Naive thymus-derived CD4-positive, alpha-beta T cell (primary cell): ENCODE measurements at regions of chr11 and their contacts with region 1.

Region 1: GRCh38 chr11:66438504-66439466 is at the start of gene MRPL11:
- DNase-seq: peak; percentile 74 to 93 (median 90)
- ATAC-seq: peak; percentile 100
- H3K4me3 ChIP-seq: peak within 1 kb of the TSS; percentile 86
- H3K4me3 Mint-ChIP-seq: peak within 1 kb of the TSS; percentile 83 to 96 (median 90)
- H3K27ac ChIP-seq: peak within 1 kb of the TSS; percentile 84
- H3K27ac Mint-ChIP-seq: peak within 1 kb of the TSS; percentile 84 to 99 (median 94)
- H3K4me1 ChIP-seq: peaks cover 4 to 5% of the 10 kb centered on the region in 2 donors
- H3K4me1 Mint-ChIP-seq: peaks cover 7 to 13% (median 11%) of the 10 kb centered on the region in 7 donors
- H3K27me3 ChIP-seq: no peaks in the 10 kb centered on the region
- H3K27me3 Mint-ChIP-seq: peaks cover 0 to 7% (median 0%) of the 10 kb centered on the region in 5 donors
- total RNA-seq, gene MRPL11: 23.5 to 64.1 (median 24.0) TPM

Region 2: GRCh38 chr11:66268283-66268951 is 170.4 kb before region 1 on chr11 and contains the start of gene RAB1B:
- CTCF ChIA-PET with region 1: no interaction called
- POLR2A ChIA-PET with region 1: no interaction called
- intact Hi-C with region 1: loop called in 1 of 2 experiments (anchors 1 kb)
- DNase-seq: peak; percentile 99 to 100 (median 99)
- ATAC-seq: peak; percentile 89
- H3K4me3 ChIP-seq: peak within 1 kb of the TSS; percentile 91
- H3K4me3 Mint-ChIP-seq: peak within 1 kb of the TSS; percentile 88 to 100 (median 95)
- H3K27ac ChIP-seq: peak within 1 kb of the TSS; percentile 90
- H3K27ac Mint-ChIP-seq: peak within 1 kb of the TSS; percentile 95 to 99 (median 97)
- H3K4me1 ChIP-seq: peaks cover 16 to 38% of the 10 kb centered on the region in 2 donors
- H3K4me1 Mint-ChIP-seq: peaks cover 26 to 48% (median 34%) of the 10 kb centered on the region in 7 donors
- H3K27me3 ChIP-seq: no peaks in the 10 kb centered on the region
- H3K27me3 Mint-ChIP-seq: peaks cover 0 to 3% (median 0%) of the 10 kb centered on the region in 5 donors
- total RNA-seq, gene RAB1B: 60.6 to 151 (median 70.7) TPM

Region 3: GRCh38 chr11:66386171-66387069 is 52.4 kb before region 1 on chr11:
- CTCF ChIA-PET with region 1: interaction called, 4 read pairs
- POLR2A ChIA-PET with region 1: interaction called, 3 read pairs
- intact Hi-C with region 1: loop called in 1 of 2 experiments (anchors 5 kb)
- DNase-seq: peak; percentile 59 to 83 (median 75)
- ATAC-seq: peak; percentile 83
- H3K4me3 ChIP-seq: no peak overlapping the region
- H3K4me3 Mint-ChIP-seq: peak overlapping the region; percentile 5 to 71 (median 40)
- H3K27ac ChIP-seq: no peak overlapping the region
- H3K27ac Mint-ChIP-seq: peak overlapping the region in 4 of 9 donors; percentile 0 to 20 (median 6)
- H3K4me1 ChIP-seq: peaks cover 4 to 8% of the 10 kb centered on the region in 2 donors
- H3K4me1 Mint-ChIP-seq: peaks cover 0 to 12% (median 7%) of the 10 kb centered on the region in 7 donors
- H3K27me3 ChIP-seq: no peaks in the 10 kb centered on the region
- H3K27me3 Mint-ChIP-seq: peaks cover 0 to 15% (median 0%) of the 10 kb centered on the region in 5 donors

Region 4: GRCh38 chr11:66454249-66454648 is 15.5 kb after region 1 on chr11:
- CTCF ChIA-PET with region 1: interaction called, 12 read pairs
- POLR2A ChIA-PET with region 1: interaction called, 5 read pairs
- intact Hi-C with region 1: no loop called
- DNase-seq: no peak
- ATAC-seq: no peak
- H3K4me3 ChIP-seq: no peak overlapping the region
- H3K4me3 Mint-ChIP-seq: peak overlapping the region in 3 of 10 donors; percentile 10 to 35 (median 24)
- H3K27ac ChIP-seq: no peak overlapping the region
- H3K27ac Mint-ChIP-seq: peak overlapping the region in 1 of 9 donors; percentile 30
- H3K4me1 ChIP-seq: peaks cover 0 to 10% of the 10 kb centered on the region in 2 donors
- H3K4me1 Mint-ChIP-seq: peaks cover 6 to 25% (median 18%) of the 10 kb centered on the region in 7 donors
- H3K27me3 ChIP-seq: no peaks in the 10 kb centered on the region
- H3K27me3 Mint-ChIP-seq: peaks cover 0 to 10% (median 4%) of the 10 kb centered on the region in 5 donors

Region 5: GRCh38 chr11:66510271-66510989 is 71.6 kb after region 1 on chr11 and contains the start of gene BBS1:
- CTCF ChIA-PET with region 1: no interaction called
- POLR2A ChIA-PET with region 1: no interaction called
- intact Hi-C with region 1: loop called in 1 of 2 experiments (anchors 1 kb)
- DNase-seq: peak; percentile 64 to 85 (median 78)
- ATAC-seq: peak; percentile 98
- H3K4me3 ChIP-seq: peak within 1 kb of the TSS; percentile 89
- H3K4me3 Mint-ChIP-seq: peak within 1 kb of the TSS; percentile 86 to 95 (median 90)
- H3K27ac ChIP-seq: peak within 1 kb of the TSS; percentile 65
- H3K27ac Mint-ChIP-seq: peak within 1 kb of the TSS; percentile 36 to 77 (median 67)
- H3K4me1 ChIP-seq: peaks cover 6 to 10% of the 10 kb centered on the region in 2 donors
- H3K4me1 Mint-ChIP-seq: peaks cover 9 to 24% (median 18%) of the 10 kb centered on the region in 7 donors
- H3K27me3 ChIP-seq: no peaks in the 10 kb centered on the region
- H3K27me3 Mint-ChIP-seq: no peaks in the 10 kb centered on the region
- total RNA-seq, gene BBS1: 16.9 to 38.2 (median 23.6) TPM

Region 6: DNA sequence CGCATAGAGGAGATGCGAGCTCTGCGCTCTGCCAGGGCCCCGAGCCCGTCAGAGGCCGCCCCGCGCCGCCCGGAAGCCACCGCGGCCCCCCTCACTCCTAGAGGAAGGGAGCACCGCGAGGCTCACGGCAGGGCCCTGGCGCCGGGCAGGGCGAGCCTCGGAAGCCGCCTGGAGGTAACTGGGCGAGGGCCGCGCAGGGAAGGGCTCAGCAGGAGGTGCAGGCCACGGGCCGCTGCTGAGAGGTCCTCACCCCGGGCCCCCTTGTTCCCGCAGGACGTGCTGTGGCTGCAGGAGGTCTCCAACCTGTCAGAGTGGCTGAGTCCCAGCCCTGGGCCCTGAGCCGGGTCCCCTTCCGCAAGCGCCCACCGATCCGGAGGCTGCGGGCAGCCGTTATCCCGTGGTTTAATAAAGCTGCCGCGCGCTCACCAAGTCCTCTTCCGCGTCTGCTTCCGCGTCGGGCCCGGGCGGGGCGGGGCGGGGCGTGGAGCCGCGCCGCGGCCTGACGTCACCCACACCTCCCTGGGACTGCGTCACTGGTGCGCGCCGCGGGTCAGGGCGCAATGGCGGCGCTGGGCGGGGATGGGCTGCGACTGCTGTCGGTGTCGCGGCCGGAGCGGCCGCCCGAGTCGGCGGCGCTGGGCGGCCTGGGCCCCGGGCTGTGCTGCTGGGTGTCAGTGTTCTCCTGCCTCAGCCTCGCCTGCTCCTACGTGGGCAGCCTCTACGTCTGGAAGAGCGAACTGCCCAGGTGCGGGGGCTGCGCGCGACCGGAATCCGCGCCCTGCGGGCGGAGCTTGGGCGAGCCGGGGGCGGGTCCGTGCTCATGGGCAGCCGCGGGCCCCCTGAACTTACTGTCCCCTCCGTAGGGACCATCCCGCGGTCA is 404.4 kb after region 1 on chr11 and contains the start of gene RCE1:
- CTCF ChIA-PET with region 1: no interaction called
- POLR2A ChIA-PET with region 1: no interaction called
- intact Hi-C with region 1: loop called in 1 of 2 experiments (anchors 1 kb)
- DNase-seq: peak; percentile 86 to 96 (median 91)
- ATAC-seq: peak; percentile 96
- H3K4me3 ChIP-seq: peak within 1 kb of the TSS; percentile 94
- H3K4me3 Mint-ChIP-seq: peak within 1 kb of the TSS; percentile 87 to 97 (median 93)
- H3K27ac ChIP-seq: peak within 1 kb of the TSS; percentile 96
- H3K27ac Mint-ChIP-seq: peak within 1 kb of the TSS; percentile 74 to 97 (median 92)
- H3K4me1 ChIP-seq: peaks cover 31 to 47% of the 10 kb centered on the region in 2 donors
- H3K4me1 Mint-ChIP-seq: peaks cover 31 to 58% (median 47%) of the 10 kb centered on the region in 7 donors
- H3K27me3 ChIP-seq: no peaks in the 10 kb centered on the region
- H3K27me3 Mint-ChIP-seq: no peaks in the 10 kb centered on the region
- total RNA-seq, gene RCE1: 24.6 to 47.1 (median 33.6) TPM